Heart right ventricle (tissue), 16 donors: ENCODE measurements at regions of chr9 and their contacts with region 1.

Region 1: GRCh38 chr9:37511016-37512010 is 25.6 kb downstream of the POLR1E start:
- DNase-seq: no peak
- ATAC-seq: peak in 6 of 8 donors; percentile 11 to 54 (median 28)
- H3K4me3 ChIP-seq: no peak overlapping the region
- H3K27ac ChIP-seq: no peak overlapping the region
- H3K4me1 ChIP-seq: no peaks in the 10 kb centered on the region
- H3K27me3 ChIP-seq: no peaks in the 10 kb centered on the region
- CTCF ChIP-seq: peak in 2 of 9 donors; percentile 15 to 31

Region 2: GRCh38 chr9:37371565-37372464 is 139.5 kb before region 1 on chr9:
- intact Hi-C with region 1: no loop called
- DNase-seq: no peak
- ATAC-seq: peak in 1 of 8 donors; percentile 48
- H3K4me3 ChIP-seq: no peak overlapping the region
- H3K27ac ChIP-seq: no peak overlapping the region
- H3K4me1 ChIP-seq: no peaks in the 10 kb centered on the region
- H3K27me3 ChIP-seq: peaks cover 0 to 6% (median 0%) of the 10 kb centered on the region in 7 donors
- CTCF ChIP-seq: no peak

Region 3: GRCh38 chr9:37471942-37472679 is 39.2 kb before region 1 on chr9:
- intact Hi-C with region 1: loop called in 1 of 10 experiments (anchors 1 kb)
- DNase-seq: no peak
- ATAC-seq: peak in 7 of 8 donors; percentile 46 to 72 (median 64)
- H3K4me3 ChIP-seq: peak overlapping the region in 7 of 10 donors; percentile 8 to 49 (median 43)
- H3K27ac ChIP-seq: peak overlapping the region in 9 of 10 donors; percentile 44 to 83 (median 68)
- H3K4me1 ChIP-seq: peaks cover 0 to 14% (median 11%) of the 10 kb centered on the region in 9 donors
- H3K27me3 ChIP-seq: peaks cover 0 to 3% (median 0%) of the 10 kb centered on the region in 7 donors
- CTCF ChIP-seq: no peak